ENCODE measurements at regions of chr1 and their contacts with region 1.

Region 1: DNA sequence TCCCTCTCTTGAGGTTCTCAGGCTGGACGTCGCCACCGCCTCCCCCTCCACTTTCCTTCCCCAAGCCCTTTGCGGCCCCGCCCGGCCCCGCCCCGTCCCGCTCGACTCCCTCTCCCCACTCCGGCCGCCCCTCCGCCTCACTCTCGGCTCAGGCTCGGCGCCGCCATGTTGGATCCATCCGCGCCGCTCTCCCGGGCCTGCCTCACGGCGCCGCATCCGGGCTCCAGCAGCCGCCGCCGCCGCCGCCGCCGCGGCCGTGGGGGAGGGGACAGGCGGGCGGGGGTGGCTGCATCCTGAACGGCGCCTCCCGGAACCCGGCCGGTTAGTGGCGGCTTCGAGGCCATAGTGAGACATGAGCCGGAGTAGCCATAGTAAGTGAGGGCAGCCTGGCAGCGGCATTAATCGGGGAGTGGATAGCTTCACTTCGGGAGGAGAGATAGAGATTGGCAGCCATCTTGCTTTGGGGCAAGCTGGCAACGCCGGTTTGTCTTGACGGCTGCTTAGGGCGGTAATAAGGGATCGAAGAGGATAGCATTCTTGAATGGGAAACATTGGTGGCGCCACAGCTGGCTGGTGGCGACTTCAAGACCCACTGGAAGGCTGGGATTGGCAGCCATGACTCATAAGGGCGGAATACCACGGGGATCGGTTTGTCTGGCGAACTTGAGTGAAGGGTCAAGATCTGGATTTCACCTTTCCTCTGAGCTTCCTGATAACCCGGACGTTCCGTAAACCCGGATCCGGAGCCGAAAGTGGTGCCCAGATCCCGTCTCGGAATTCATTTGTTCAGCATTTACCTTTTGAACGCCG is at the start of gene DEDD:
- DNase-seq: peak; percentile 95 to 98 (median 96)
- ATAC-seq: peak; percentile 95 to 96
- H3K4me3 ChIP-seq: peak within 1 kb of the TSS; percentile 86
- H3K27ac ChIP-seq: peak within 1 kb of the TSS; percentile 98
- H3K4me1 ChIP-seq: no peaks in the 10 kb centered on the region
- H3K27me3 ChIP-seq: no peaks in the 10 kb centered on the region
- total RNA-seq, gene DEDD: 26.3 to 30.6 (median 28.7) TPM

Region 2: GRCh38 chr1:161045750-161046571 is 86.7 kb before region 1 on chr1 and contains the start of gene USF1:
- intact Hi-C with region 1: loop called in 1 of 4 experiments (anchors 10 kb)
- DNase-seq: peak; percentile 92 to 96 (median 96)
- ATAC-seq: peak; percentile 97 to 98
- H3K4me3 ChIP-seq: peak within 1 kb of the TSS; percentile 93
- H3K27ac ChIP-seq: peak within 1 kb of the TSS; percentile 93
- H3K4me1 ChIP-seq: peaks cover 3% of the 10 kb centered on the region
- H3K27me3 ChIP-seq: no peaks in the 10 kb centered on the region
- total RNA-seq, gene USF1: 34.5 to 41.4 (median 40.7) TPM

Region 3: DNA sequence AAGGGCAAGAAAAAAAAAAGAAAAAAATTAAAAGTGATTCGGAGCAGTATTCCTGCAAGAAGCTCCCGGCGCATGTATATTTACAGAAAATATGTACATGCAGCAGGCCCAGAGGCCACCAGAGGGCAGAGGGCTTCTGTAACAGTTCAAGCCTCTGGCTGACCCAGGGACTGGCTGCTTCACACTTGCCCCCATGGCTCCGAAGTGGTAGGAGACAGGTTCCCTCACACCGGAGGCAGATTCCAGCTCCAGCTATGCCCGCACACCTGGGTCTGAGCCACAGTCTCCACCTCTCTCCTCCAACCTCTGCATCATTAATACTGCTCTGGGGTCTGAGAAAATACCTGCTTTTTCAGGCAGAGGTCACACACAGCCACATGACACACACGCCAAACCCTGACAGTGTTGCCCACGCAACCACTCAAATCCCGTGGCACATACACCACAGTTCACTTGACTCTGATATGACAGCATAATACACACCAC is 60.7 kb before region 1 on chr1:
- intact Hi-C with region 1: loop called in 1 of 4 experiments (anchors 10 kb)
- DNase-seq: peak; percentile 71 to 88 (median 75)
- ATAC-seq: no peak
- H3K4me3 ChIP-seq: no peak overlapping the region
- H3K27ac ChIP-seq: no peak overlapping the region
- H3K4me1 ChIP-seq: no peaks in the 10 kb centered on the region
- H3K27me3 ChIP-seq: no peaks in the 10 kb centered on the region